ENCODE measurements at regions of chr15 and their contacts with region 1.

Region 1: GRCh38 chr15:97105471-97105870 is 775.0 kb downstream of the NR2F2 start:
- DNase-seq: no peak
- ATAC-seq: no peak
- H3K4me3 ChIP-seq: no peak overlapping the region
- H3K27ac ChIP-seq: no peak overlapping the region
- H3K4me1 ChIP-seq: no peaks in the 10 kb centered on the region
- H3K27me3 ChIP-seq: no peaks in the 10 kb centered on the region
- CTCF ChIP-seq: no peak
- POLR2A ChIP-seq: no peak

Region 2: GRCh38 chr15:97036301-97036700 is 69.2 kb before region 1 on chr15:
- intact Hi-C with region 1: loop called in 1 of 10 experiments (anchors 10 kb)
- DNase-seq: no peak
- ATAC-seq: no peak
- H3K4me3 ChIP-seq: no peak overlapping the region
- H3K27ac ChIP-seq: no peak overlapping the region
- H3K4me1 ChIP-seq: no peaks in the 10 kb centered on the region
- H3K27me3 ChIP-seq: peaks cover 0 to 3% (median 0%) of the 10 kb centered on the region in 9 donors
- CTCF ChIP-seq: no peak
- POLR2A ChIP-seq: no peak

Measured in heart left ventricle (tissue), 16 donors.